ENCODE measurements at regions of chr14 and their contacts with region 1.

Region 1: GRCh38 chr14:80996049-80996901 is 40.9 kb downstream of the TSHR start:
- DNase-seq: peak; percentile 20
- H3K4me3 Mint-ChIP-seq: no peak overlapping the region
- H3K27ac Mint-ChIP-seq: no peak overlapping the region
- H3K4me1 Mint-ChIP-seq: peaks cover 7% of the 10 kb centered on the region
- H3K27me3 Mint-ChIP-seq: peaks cover 15% of the 10 kb centered on the region

Region 2: DNA sequence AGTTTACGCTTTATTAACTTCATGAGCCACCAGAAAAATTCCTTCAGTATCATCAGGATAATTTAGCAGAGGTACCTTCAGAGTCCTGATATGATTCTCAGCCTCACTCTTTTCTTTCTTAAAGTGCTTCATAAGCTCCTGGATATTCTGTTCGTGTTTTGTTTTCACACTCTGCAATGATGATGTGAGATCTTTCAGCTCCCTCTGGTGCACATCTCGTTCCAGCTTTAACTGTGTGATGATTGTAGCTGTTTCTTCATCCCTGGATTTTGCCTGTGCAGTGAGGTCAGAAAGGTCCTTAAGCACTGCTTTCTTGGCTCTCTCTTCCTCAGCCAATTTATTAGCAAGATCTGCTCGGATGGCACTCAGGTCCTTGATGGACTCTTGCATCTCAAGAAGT is 211.5 kb before region 1 on chr14:
- CTCF ChIA-PET with region 1: no interaction called
- POLR2A ChIA-PET with region 1: no interaction called
- intact Hi-C with region 1: no loop called
- DNase-seq: no peak
- H3K4me3 Mint-ChIP-seq: no peak overlapping the region
- H3K27ac Mint-ChIP-seq: no peak overlapping the region
- H3K4me1 Mint-ChIP-seq: no peaks in the 10 kb centered on the region
- H3K27me3 Mint-ChIP-seq: no peaks in the 10 kb centered on the region

Region 3: DNA sequence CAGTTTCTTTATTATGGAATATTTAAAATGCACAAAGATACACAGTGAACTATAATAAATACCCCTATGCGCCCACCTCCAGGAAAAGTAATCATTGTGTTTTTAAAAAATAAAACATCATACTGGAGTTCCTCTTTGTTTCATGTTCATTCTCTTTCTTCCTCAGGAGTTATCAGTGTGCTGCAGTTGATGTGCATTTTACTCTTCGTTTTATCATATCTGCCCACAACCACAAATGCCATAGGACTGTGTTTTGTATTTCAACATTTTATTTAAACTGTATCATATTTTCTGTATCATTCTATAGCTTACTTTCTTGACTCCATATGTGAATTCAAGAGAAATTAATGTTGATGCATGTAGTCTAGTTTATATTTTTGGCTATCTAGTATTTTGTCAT is 13.1 kb after region 1 on chr14:
- CTCF ChIA-PET with region 1: interaction called, 10 read pairs
- POLR2A ChIA-PET with region 1: interaction called, 3 read pairs
- intact Hi-C with region 1: no loop called
- DNase-seq: no peak
- H3K4me3 Mint-ChIP-seq: no peak overlapping the region
- H3K27ac Mint-ChIP-seq: no peak overlapping the region
- H3K4me1 Mint-ChIP-seq: no peaks in the 10 kb centered on the region
- H3K27me3 Mint-ChIP-seq: no peaks in the 10 kb centered on the region

Region 4: GRCh38 chr14:81062816-81063215 is 66.5 kb after region 1 on chr14:
- CTCF ChIA-PET with region 1: interaction called, 4 read pairs
- POLR2A ChIA-PET with region 1: no interaction called
- intact Hi-C with region 1: loop called (anchors 5 kb)
- DNase-seq: peak; percentile 19
- H3K4me3 Mint-ChIP-seq: no peak overlapping the region
- H3K27ac Mint-ChIP-seq: no peak overlapping the region
- H3K4me1 Mint-ChIP-seq: no peaks in the 10 kb centered on the region
- H3K27me3 Mint-ChIP-seq: peaks cover 3% of the 10 kb centered on the region

Measured in activated CD4-positive, alpha-beta memory T cell treated with anti-CD3 and anti-CD28 coated beads for 36 hours (primary cell).